ENCODE measurements at regions of chr3 and their contacts with region 1.

Region 1: GRCh38 chr3:149969940-149970715 is 567 bp downstream of the PFN2 start:
- DNase-seq: peak; percentile 94

Region 2: GRCh38 chr3:150183678-150184425 is 213.7 kb after region 1 on chr3:
- intact Hi-C with region 1: loop called (anchors 2 to 10 kb)
- DNase-seq: peak; percentile 85

Region 3: GRCh38 chr3:150216041-150216811 is 246.1 kb after region 1 on chr3:
- intact Hi-C with region 1: loop called in 1 of 2 experiments (anchors 2 kb)
- DNase-seq: no peak

Region 4: DNA sequence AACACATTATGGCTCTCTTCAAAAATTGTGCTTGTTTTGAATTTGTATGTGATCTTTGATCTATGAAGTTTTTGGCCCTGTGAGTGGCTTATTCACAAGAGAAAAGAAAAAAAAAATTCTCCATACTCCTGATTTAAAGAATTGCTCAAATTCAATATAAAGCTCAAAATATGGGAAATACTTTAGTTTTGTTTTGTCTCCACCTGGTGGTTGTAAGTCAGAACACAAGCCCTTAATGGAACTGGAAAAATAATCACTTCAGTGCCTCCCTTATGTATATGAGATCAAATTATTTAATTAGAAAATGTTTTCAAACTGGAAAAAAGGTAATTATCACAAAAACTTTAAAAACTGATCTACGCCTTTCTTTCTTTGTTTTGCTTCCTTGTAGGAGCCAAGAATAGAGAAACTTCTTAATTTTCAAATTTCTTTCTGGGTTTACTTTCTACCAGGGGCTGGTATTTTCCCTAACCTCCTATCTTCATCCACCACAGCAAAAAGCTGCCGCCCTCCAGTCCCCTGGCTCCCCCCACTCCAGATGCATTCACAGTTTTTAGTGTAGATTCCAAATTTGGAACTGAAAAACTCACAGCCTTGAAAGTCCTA is 525.5 kb after region 1 on chr3:
- intact Hi-C with region 1: loop called in 1 of 2 experiments (anchors 10 kb)
- DNase-seq: no peak